GM12878 (cell line): ENCODE measurements at regions of chr3 and their contacts with region 1.

Region 1: GRCh38 chr3:132445817-132446216 is 28.5 kb downstream of the DNAJC13 start:
- DNase-seq: no peak
- ATAC-seq: peak; percentile 66
- H3K4me3 ChIP-seq: no peak overlapping the region
- H3K27ac ChIP-seq: peak overlapping the region; percentile 24; the same call in 1 of the 2 replicates
- H3K4me1 ChIP-seq: peaks cover 30% of the 10 kb centered on the region
- H3K27me3 ChIP-seq: no peaks in the 10 kb centered on the region
- CTCF ChIP-seq: no peak
- EP300 ChIP-seq: no peak
- POLR2A ChIP-seq: no peak
- RAD21 ChIP-seq: no peak

Region 2: DNA sequence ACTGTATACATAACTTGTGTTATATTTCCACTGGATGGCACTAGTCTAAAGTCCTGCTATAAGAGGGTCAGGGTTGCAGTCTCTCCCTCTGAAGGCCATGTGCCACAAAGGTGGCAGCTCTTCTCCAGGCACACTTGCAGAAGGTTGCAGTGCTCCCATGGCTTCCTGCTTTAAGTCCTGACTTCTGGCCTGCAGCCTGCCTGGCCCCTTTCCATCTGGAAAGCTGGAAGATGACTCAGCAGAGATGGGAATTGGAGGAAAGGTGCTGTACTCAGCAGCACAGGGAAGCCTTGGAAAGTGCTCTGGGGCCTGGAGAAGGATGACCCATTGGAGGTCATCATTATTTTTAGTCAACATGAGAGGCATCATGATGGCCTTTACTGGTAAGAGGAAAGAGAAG is 902.1 kb before region 1 on chr3:
- CTCF ChIA-PET with region 1: no interaction called
- POLR2A ChIA-PET with region 1: no interaction called
- RAD21 ChIA-PET with region 1: no interaction called
- SMC1A ChIA-PET with region 1: no interaction called
- in situ Hi-C with region 1: no loop called
- intact Hi-C with region 1: no loop called
- DNase-seq: no peak
- ATAC-seq: no peak
- H3K4me3 ChIP-seq: no peak overlapping the region
- H3K27ac ChIP-seq: no peak overlapping the region
- H3K4me1 ChIP-seq: no peaks in the 10 kb centered on the region
- H3K27me3 ChIP-seq: no peaks in the 10 kb centered on the region; a peak in 1 of 4 replicates
- CTCF ChIP-seq: no peak
- EP300 ChIP-seq: no peak
- POLR2A ChIP-seq: no peak
- RAD21 ChIP-seq: no peak

Region 3: DNA sequence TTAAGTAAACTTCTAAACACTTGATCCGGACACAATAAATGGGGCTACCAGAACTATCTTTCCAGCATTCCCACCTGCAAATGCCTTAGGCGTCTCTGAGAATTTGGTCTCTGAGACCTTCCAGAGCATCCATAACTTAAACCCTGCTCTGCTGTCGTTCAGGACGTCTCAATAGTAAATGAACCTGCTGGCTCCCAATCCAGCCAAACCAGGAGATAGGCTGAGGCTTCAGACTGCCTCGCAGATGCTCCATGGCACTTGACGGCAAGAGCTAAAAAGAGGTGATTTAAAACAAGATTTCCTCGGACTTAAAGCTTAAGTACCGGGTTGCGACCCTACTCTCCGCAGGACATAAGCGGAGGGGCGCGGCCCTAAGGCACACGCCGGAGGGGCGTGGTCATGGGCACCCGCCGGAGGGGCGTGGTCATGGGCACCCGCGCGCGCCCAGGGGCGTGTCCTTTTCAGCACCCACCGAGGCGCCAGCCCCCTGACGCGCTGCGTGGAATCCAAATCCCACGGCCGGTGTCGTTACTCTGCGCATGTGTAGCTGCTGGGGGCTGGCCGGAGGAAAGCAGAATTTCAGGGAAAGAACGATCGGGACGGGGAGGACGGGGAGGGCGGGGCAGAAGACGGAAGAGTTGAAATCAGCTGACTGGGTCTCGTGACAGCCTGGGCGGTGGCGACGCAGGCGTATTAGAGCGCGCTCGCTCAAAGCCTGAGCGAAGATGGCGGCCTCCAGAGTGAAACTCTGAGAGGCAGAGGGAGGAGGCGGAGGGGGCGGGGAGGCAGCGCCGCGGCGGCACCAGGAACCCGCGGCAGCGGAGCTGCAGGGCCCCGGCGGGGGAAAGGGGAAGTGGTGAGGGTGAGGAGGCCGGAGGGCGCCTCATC is 28.8 kb before region 1 on chr3 and contains the start of gene DNAJC13:
- CTCF ChIA-PET with region 1: interaction called, 3 read pairs
- POLR2A ChIA-PET with region 1: interaction called, 5 read pairs
- RAD21 ChIA-PET with region 1: interaction called, 3 read pairs
- SMC1A ChIA-PET with region 1: interaction called, 14 read pairs
- in situ Hi-C with region 1: no loop called
- intact Hi-C with region 1: no loop called
- DNase-seq: peak; percentile 67
- ATAC-seq: peak; percentile 96
- H3K4me3 ChIP-seq: peak within 1 kb of the TSS; percentile 88
- H3K27ac ChIP-seq: peak within 1 kb of the TSS; percentile 71
- H3K4me1 ChIP-seq: peaks cover 7% of the 10 kb centered on the region
- H3K27me3 ChIP-seq: no peaks in the 10 kb centered on the region
- CTCF ChIP-seq: no peak
- EP300 ChIP-seq: no peak
- POLR2A ChIP-seq: peak; percentile 78
- RAD21 ChIP-seq: no peak
- polyA plus RNA-seq, gene DNAJC13: 8.3 to 8.7 TPM

Region 4: GRCh38 chr3:132422531-132422930 is 23.3 kb before region 1 on chr3:
- CTCF ChIA-PET with region 1: no interaction called
- POLR2A ChIA-PET with region 1: interaction called, 5 read pairs
- RAD21 ChIA-PET with region 1: interaction called, 3 read pairs
- SMC1A ChIA-PET with region 1: interaction called, 14 read pairs
- in situ Hi-C with region 1: no loop called
- intact Hi-C with region 1: no loop called
- DNase-seq: no peak
- ATAC-seq: no peak
- H3K4me3 ChIP-seq: no peak overlapping the region
- H3K27ac ChIP-seq: no peak overlapping the region
- H3K4me1 ChIP-seq: no peaks in the 10 kb centered on the region; the same call in 1 of the 2 replicates
- H3K27me3 ChIP-seq: no peaks in the 10 kb centered on the region
- CTCF ChIP-seq: no peak
- EP300 ChIP-seq: no peak
- POLR2A ChIP-seq: no peak
- RAD21 ChIP-seq: no peak

Region 5: DNA sequence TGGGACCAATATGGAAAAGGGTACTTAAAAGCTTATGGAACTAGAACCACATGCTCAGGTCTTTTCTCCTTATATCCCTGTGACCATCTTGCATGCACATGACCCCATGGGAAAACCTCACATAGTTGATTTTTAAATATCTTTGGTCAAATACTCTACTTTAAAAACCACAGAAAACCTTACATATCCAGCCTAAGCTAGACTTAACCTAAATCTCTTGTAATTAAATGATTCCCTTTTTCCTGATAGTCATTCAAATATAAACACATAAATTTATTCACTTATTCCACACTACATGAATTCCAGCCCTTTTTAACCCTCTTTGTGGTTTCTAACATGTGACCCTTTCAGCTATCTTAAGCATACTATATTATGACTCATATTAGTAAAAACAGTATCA is 18.2 kb after region 1 on chr3:
- CTCF ChIA-PET with region 1: interaction called, 3 read pairs
- POLR2A ChIA-PET with region 1: no interaction called
- RAD21 ChIA-PET with region 1: interaction called, 3 read pairs
- SMC1A ChIA-PET with region 1: interaction called, 28 read pairs
- in situ Hi-C with region 1: no loop called
- intact Hi-C with region 1: no loop called
- DNase-seq: no peak
- ATAC-seq: no peak
- H3K4me3 ChIP-seq: no peak overlapping the region
- H3K27ac ChIP-seq: no peak overlapping the region
- H3K4me1 ChIP-seq: no peaks in the 10 kb centered on the region
- H3K27me3 ChIP-seq: no peaks in the 10 kb centered on the region
- CTCF ChIP-seq: no peak
- EP300 ChIP-seq: no peak
- POLR2A ChIP-seq: no peak
- RAD21 ChIP-seq: no peak